GM12878 (cell line): ENCODE measurements at regions of chr17 and their contacts with region 1.

Region 1: DNA sequence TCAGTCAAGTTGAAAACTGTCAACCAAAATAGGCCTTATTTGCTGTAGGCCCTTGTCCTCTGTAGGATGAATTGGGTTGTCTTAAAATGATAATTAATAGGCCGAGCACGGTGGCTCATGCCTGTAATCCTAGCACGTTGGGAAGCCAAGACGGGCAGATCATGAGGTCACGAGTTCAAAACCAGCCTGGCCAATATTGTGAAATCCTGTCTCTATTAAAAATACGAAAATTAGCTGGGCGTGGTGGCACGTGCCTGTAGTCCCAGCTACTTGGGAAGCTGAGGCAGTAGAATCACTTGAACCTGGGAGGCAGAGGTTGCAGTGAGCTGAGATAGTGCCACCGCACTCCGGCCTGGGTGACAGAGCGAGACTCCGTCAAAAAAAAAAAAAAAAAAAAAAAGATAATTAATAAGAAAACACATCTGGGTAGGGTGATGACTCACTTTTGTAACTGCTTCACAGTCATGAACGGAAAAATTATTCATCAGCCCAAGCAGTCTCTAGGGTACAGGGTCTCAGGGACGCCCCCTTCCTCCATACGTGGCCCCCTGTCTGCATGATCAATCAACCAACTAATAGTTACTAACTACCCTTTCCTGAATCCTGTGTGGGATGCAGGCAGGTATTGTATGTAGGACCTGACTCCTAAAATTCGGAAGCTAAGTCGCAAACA is 137.0 kb upstream of the RCVRN start:
- DNase-seq: peak; percentile 45
- ATAC-seq: peak; percentile 58
- H3K4me3 ChIP-seq: no peak overlapping the region
- H3K27ac ChIP-seq: peak overlapping the region; percentile 74
- H3K4me1 ChIP-seq: peaks cover 31% of the 10 kb centered on the region
- H3K27me3 ChIP-seq: no peaks in the 10 kb centered on the region
- CTCF ChIP-seq: no peak
- EP300 ChIP-seq: 0 out of 4 replicates have a peak, but pooled peaks of 1 of the 2 experiments have one; percentile 38
- POLR2A ChIP-seq: no peak
- RAD21 ChIP-seq: no peak

Region 2: DNA sequence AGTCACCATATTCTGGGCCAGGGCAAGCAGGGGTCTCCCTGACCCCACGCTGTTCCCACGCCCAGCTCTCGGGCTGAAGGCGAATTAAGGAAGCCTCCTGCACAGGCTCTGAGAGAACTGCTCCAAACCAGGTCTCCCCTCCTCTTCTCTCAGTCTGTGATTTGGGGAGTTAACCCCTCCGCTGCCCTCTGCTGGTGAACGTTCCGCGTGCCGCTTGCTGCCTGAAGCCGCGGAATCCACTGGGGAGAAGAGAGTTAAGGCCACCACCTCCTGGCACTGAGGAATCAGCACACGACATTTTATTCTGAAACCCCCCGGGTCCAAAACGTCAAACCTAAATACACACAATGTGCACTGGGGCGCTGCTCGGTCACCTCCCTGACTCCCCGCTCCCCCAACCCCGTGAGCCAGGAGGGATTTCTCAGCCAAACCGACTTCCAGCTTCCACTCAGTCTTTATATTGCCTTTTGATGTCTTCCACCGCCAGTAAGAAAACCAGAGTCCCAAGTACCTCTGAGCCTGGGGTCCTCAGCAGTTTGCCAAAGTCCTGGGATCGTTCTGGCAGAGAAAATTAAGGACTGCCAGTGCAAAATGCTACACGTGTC is 82.6 kb before region 1 on chr17:
- CTCF ChIA-PET with region 1: no interaction called
- POLR2A ChIA-PET with region 1: no interaction called
- RAD21 ChIA-PET with region 1: no interaction called
- SMC1A ChIA-PET with region 1: no interaction called
- in situ Hi-C with region 1: no loop called
- intact Hi-C with region 1: no loop called
- DNase-seq: no peak
- ATAC-seq: peak; percentile 74
- H3K4me3 ChIP-seq: no peak overlapping the region
- H3K27ac ChIP-seq: no peak overlapping the region
- H3K4me1 ChIP-seq: no peaks in the 10 kb centered on the region
- H3K27me3 ChIP-seq: no peaks in the 10 kb centered on the region
- CTCF ChIP-seq: peak; percentile 52 to 59 (median 52); a peak in 5 of 6 replicates
- EP300 ChIP-seq: no peak
- POLR2A ChIP-seq: no peak
- RAD21 ChIP-seq: peak; percentile 29; the same call in 1 of the 2 replicates

Region 3: DNA sequence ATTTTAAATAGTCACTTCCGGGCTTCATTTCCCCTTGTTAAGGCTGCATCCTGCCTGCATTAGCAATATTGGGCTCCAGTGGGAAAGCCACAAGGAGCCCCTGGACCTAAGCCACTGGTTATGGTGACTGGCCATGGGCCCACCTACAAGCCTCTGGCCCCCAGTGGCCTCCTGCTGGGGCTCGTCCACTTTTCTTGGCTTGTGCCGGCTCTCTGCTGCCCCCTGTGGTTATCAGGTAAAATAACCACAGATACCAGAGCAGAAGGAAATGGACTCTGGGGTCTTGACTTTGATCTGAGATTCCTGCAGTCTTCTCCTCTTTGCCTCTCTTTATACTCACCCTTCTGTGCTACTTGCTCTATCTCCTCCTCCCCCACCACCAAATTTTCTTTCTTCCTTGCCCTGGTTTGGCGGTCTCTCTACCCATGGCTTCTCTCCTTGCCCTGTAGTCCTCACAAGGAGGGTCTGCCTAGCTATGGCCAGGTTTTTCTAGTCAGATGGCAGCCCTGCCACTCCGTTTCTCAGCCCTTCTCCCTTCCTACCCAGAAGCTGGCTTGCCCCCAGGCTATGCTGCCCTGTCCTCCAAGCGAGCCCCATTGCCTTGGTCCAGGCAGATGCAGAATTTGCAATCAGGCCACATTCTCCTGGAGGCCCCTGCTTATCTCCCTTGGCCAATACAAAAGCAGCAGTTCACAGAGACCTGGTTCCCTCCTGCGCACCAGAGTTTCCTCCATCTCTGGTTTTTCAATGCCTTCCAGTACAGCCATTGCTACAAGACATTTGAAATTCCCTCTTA is 54.1 kb before region 1 on chr17:
- CTCF ChIA-PET with region 1: no interaction called
- POLR2A ChIA-PET with region 1: no interaction called
- RAD21 ChIA-PET with region 1: no interaction called
- SMC1A ChIA-PET with region 1: no interaction called
- in situ Hi-C with region 1: no loop called
- intact Hi-C with region 1: loop called (anchors 5 kb)
- DNase-seq: no peak
- ATAC-seq: peak; percentile 80
- H3K4me3 ChIP-seq: no peak overlapping the region
- H3K27ac ChIP-seq: peak overlapping the region; percentile 47
- H3K4me1 ChIP-seq: peaks cover 4% of the 10 kb centered on the region; the same call in 1 of the 2 replicates
- H3K27me3 ChIP-seq: no peaks in the 10 kb centered on the region
- CTCF ChIP-seq: peak; percentile 62 to 75 (median 68)
- EP300 ChIP-seq: no peak
- POLR2A ChIP-seq: no peak
- RAD21 ChIP-seq: peak; percentile 52

Region 4: DNA sequence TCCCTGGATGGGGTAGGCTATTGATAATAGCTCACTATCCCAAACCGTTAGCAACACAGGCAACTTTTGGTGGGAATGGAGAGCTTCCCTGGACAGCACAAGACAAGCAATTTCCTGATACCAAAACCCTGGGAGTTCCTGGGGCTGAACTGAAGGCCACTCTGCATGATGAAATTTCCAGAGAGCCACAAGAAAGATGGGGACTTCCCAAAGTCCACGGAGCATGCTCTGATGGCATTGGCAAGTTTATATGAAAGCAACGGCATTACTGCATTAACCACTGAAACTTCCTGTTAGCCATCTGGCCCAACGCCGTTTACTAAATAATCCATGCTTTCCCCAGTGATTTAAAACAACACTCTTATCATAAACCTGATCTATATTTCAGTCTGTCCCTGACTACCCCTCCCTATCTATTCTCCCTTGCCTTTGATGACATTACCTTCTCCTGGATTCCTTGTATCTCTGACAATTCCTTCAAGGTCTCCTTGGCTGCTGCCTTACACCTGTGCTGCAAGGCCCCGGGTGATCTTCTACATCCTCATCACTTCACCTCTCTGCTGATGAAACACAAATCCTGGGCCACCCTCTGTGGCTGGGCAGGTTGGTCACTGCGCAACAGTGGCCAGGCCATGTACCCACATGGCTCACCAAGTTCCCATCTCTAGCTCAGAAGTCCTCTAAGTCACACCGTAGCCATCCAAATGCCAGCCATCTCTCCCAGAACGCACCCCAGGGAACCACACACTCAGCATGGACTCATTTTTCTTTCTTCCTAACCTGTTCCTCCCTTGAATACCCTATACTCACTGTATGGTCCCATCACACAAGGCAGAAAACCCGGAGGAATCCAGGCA is 28.5 kb before region 1 on chr17:
- CTCF ChIA-PET with region 1: no interaction called
- POLR2A ChIA-PET with region 1: no interaction called
- RAD21 ChIA-PET with region 1: no interaction called
- SMC1A ChIA-PET with region 1: no interaction called
- in situ Hi-C with region 1: no loop called
- intact Hi-C with region 1: loop called (anchors 2 kb)
- DNase-seq: peak; percentile 61
- ATAC-seq: peak; percentile 92
- H3K4me3 ChIP-seq: peak overlapping the region; percentile 26; the same call in 1 of the 2 replicates
- H3K27ac ChIP-seq: peak overlapping the region; percentile 65
- H3K4me1 ChIP-seq: peaks cover 18% of the 10 kb centered on the region
- H3K27me3 ChIP-seq: no peaks in the 10 kb centered on the region
- CTCF ChIP-seq: no peak
- EP300 ChIP-seq: peak; percentile 40 to 58; a peak in 3 of 4 replicates
- POLR2A ChIP-seq: no peak
- RAD21 ChIP-seq: no peak

Region 5: DNA sequence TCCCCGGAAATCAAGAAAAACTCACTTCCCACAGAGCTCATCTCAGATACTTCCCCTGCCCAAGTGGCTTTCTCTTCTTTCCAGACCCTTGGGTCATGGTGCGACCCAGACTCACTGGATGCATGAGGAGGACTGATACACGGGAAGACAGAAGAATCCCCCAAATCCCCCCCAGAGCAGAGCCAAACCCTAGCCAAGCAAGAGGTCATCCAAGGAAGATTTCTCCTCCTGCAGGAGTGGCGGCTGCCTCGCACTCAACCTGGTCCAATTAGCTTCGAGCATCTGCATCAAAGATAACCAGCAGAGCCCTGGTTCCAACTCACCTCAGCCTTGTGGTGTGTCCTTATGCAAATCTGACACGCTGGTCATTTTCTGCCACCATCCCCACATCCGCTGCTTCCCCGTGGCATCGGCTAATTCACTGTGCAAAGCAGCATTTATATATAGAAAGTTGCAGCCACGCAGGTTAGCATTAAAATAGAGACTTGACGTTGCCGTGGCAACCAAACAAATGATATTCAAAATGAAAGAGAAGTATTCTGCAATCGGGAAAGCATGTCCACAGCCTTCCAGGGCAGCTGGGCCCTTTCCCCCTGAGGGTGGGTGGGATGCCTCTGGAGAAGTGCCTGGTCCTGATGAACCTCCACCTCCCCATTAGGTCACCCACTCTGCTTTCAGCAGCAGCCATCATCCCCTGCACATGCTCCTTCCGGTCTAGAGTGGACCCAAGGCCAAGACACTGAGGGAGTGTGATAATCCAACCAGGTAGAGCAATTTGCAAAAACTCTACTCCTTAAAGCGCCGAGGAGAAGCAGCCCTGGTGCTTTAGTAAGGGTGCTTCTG is 17.5 kb after region 1 on chr17:
- CTCF ChIA-PET with region 1: no interaction called
- POLR2A ChIA-PET with region 1: no interaction called
- RAD21 ChIA-PET with region 1: no interaction called
- SMC1A ChIA-PET with region 1: interaction called, 4 read pairs
- in situ Hi-C with region 1: no loop called
- intact Hi-C with region 1: loop called (anchors 2 kb)
- DNase-seq: peak; percentile 95
- ATAC-seq: peak; percentile 90
- H3K4me3 ChIP-seq: peak overlapping the region; percentile 35; the same call in 1 of the 2 replicates
- H3K27ac ChIP-seq: peak overlapping the region; percentile 72
- H3K4me1 ChIP-seq: peaks cover 51% of the 10 kb centered on the region
- H3K27me3 ChIP-seq: no peaks in the 10 kb centered on the region
- CTCF ChIP-seq: no peak
- EP300 ChIP-seq: peak; percentile 21 to 84; a peak in 2 of 4 replicates
- POLR2A ChIP-seq: no peak
- RAD21 ChIP-seq: no peak

Region 6: GRCh38 chr17:10156948-10157607 is 115.0 kb after region 1 on chr17:
- CTCF ChIA-PET with region 1: no interaction called
- POLR2A ChIA-PET with region 1: no interaction called
- RAD21 ChIA-PET with region 1: no interaction called
- SMC1A ChIA-PET with region 1: no interaction called
- in situ Hi-C with region 1: no loop called
- intact Hi-C with region 1: loop called (anchors 2 kb)
- DNase-seq: peak; percentile 73
- ATAC-seq: peak; percentile 93
- H3K4me3 ChIP-seq: no peak overlapping the region
- H3K27ac ChIP-seq: peak overlapping the region; percentile 71
- H3K4me1 ChIP-seq: peaks cover 17% of the 10 kb centered on the region
- H3K27me3 ChIP-seq: no peaks in the 10 kb centered on the region
- CTCF ChIP-seq: no peak
- EP300 ChIP-seq: peak in 1 of 2 experiments; percentile 69; a peak in 3 of 4 replicates
- POLR2A ChIP-seq: 0 out of 2 replicates have a peak, but pooled peaks have one; percentile 15
- RAD21 ChIP-seq: no peak